Activated CD4-positive, alpha-beta T cell treated with anti-CD3 and anti-CD28 coated beads for 36 hours (primary cell): ENCODE measurements at regions of chr17 and their contacts with region 1.

Region 1: GRCh38 chr17:76557368-76558197 is 17.7 kb downstream of the PRCD start:
- DNase-seq: peak; percentile 97
- ATAC-seq: peak; percentile 87
- H3K4me3 Mint-ChIP-seq: peak overlapping the region; percentile 100
- H3K27ac Mint-ChIP-seq: peak overlapping the region; percentile 99
- H3K4me1 Mint-ChIP-seq: peaks cover 50% of the 10 kb centered on the region
- H3K27me3 Mint-ChIP-seq: no peaks in the 10 kb centered on the region

Region 2: GRCh38 chr17:76261421-76262215 is 296.0 kb before region 1 on chr17:
- CTCF ChIA-PET with region 1: no interaction called
- POLR2A ChIA-PET with region 1: no interaction called
- intact Hi-C with region 1: no loop called
- DNase-seq: peak; percentile 54
- ATAC-seq: no peak
- H3K4me3 Mint-ChIP-seq: peak overlapping the region; percentile 8
- H3K27ac Mint-ChIP-seq: peak overlapping the region; percentile 85
- H3K4me1 Mint-ChIP-seq: peaks cover 35% of the 10 kb centered on the region
- H3K27me3 Mint-ChIP-seq: no peaks in the 10 kb centered on the region

Region 3: DNA sequence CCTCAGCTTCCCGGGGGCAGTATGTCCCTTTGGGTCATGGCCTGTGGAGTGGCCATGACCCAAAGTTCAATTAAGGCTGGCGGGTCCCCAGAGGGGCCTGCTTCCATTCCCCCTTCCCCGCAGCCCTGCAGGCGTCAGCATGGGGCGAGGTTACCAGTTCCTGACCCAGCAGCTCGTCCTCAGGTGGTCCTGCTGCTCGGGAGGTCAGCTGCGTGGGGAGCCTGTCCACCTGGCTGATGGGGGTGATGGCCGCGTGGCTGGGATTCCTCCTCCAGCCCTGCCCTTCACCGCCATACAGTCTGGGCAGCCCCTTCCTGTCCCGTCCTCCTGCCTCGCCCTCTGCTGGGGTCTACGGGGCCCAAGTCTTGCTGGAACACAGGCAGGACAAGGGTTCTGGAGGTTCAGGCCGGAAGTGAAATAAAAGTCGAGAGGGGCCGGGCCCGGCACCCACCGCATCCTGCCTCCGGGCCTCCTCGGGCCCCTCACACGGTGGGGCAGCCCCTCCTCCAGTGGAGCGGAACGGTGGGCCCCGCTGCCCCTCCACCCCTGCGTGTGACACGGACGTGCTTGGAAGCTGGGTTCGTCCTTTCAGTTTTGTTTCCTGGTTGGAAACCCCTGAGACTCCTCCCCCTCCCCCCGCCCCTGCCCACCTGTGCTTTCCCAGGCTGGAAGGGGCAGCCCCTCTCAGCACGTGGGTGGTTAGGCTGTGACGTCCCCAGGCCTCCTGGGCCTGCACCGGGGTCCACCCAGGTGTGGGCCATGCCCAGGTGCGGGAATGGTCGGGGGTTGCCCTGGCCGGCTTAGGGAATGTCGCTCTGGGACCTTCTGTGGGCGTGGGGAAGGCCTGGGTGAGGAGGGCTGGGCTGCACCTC is 285.7 kb before region 1 on chr17:
- CTCF ChIA-PET with region 1: no interaction called
- POLR2A ChIA-PET with region 1: interaction called, 4 read pairs
- intact Hi-C with region 1: loop called in 1 of 2 experiments (anchors 1 kb)
- DNase-seq: peak; percentile 95
- ATAC-seq: peak; percentile 57
- H3K4me3 Mint-ChIP-seq: peak overlapping the region; percentile 96
- H3K27ac Mint-ChIP-seq: peak overlapping the region; percentile 98
- H3K4me1 Mint-ChIP-seq: peaks cover 70% of the 10 kb centered on the region
- H3K27me3 Mint-ChIP-seq: no peaks in the 10 kb centered on the region

Region 4: GRCh38 chr17:76452660-76453430 is 104.7 kb before region 1 on chr17 and contains the start of gene UBE2O:
- CTCF ChIA-PET with region 1: interaction called, 3 read pairs
- POLR2A ChIA-PET with region 1: no interaction called
- intact Hi-C with region 1: loop called (anchors 1 to 5 kb)
- DNase-seq: peak; percentile 96
- ATAC-seq: peak; percentile 96
- H3K4me3 Mint-ChIP-seq: peak within 1 kb of the TSS; percentile 84
- H3K27ac Mint-ChIP-seq: peak within 1 kb of the TSS; percentile 55
- H3K4me1 Mint-ChIP-seq: peaks cover 36% of the 10 kb centered on the region
- H3K27me3 Mint-ChIP-seq: no peaks in the 10 kb centered on the region
- total RNA-seq, gene UBE2O: 28.1 to 30.7 TPM

Region 5: DNA sequence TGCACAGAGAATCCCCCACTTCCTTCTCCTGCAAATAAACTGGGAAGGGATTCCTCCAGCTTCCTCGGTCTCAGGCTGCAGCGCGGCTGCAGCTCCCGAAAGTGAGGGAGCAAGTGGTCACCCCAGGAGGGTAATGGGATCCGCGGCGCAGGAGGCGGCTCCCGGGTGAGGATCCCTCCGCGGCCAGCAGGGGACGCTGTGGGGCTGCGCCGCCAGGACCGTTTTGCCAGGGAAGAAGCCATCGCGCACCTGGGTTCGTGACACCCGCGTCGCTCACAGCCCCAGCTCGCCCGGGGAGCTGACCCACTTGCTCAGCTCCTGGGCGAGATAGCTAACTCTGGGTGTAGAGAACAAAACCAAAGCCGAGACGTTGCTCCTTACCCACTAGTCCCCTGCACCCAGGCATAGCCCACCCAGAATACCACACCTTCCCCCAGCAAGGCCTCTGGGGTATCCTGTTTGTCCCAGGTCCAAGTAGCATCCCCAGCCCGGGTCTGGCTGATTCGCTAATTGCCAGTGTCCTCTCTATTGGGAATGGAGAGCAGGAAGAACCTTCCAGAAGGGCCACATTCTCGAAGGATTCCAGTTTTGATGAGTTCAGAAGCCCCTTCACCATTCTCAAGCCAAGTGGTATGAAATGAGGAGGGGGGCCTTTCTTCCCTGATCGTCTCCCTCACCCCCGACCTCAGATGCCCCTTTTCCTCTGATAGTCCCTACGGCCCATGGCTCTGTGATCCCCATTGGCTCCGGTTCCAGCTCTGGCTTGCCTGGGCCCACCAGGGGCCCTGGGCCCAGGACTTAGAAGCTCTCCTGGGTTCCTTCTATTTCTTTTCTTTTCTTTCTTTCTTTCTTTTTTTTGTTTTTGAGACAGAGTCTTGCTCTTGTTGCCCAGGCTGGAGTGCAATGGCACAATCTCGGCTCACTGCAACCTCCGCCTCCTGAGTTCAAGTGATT is 34.2 kb before region 1 on chr17:
- CTCF ChIA-PET with region 1: interaction called, 23 read pairs
- POLR2A ChIA-PET with region 1: interaction called, 5 read pairs
- intact Hi-C with region 1: loop called in 1 of 2 experiments (anchors 1 kb)
- DNase-seq: peak; percentile 89
- ATAC-seq: peak; percentile 89
- H3K4me3 Mint-ChIP-seq: no peak overlapping the region
- H3K27ac Mint-ChIP-seq: no peak overlapping the region
- H3K4me1 Mint-ChIP-seq: peaks cover 13% of the 10 kb centered on the region
- H3K27me3 Mint-ChIP-seq: no peaks in the 10 kb centered on the region

Region 6: GRCh38 chr17:76623271-76624146 is 65.9 kb after region 1 on chr17:
- CTCF ChIA-PET with region 1: interaction called, 10 read pairs
- POLR2A ChIA-PET with region 1: interaction called, 3 read pairs
- intact Hi-C with region 1: loop called (anchors 1 to 10 kb)
- DNase-seq: peak; percentile 87
- ATAC-seq: peak; percentile 96
- H3K4me3 Mint-ChIP-seq: no peak overlapping the region
- H3K27ac Mint-ChIP-seq: no peak overlapping the region
- H3K4me1 Mint-ChIP-seq: peaks cover 7% of the 10 kb centered on the region
- H3K27me3 Mint-ChIP-seq: peaks cover 7% of the 10 kb centered on the region

Region 7: DNA sequence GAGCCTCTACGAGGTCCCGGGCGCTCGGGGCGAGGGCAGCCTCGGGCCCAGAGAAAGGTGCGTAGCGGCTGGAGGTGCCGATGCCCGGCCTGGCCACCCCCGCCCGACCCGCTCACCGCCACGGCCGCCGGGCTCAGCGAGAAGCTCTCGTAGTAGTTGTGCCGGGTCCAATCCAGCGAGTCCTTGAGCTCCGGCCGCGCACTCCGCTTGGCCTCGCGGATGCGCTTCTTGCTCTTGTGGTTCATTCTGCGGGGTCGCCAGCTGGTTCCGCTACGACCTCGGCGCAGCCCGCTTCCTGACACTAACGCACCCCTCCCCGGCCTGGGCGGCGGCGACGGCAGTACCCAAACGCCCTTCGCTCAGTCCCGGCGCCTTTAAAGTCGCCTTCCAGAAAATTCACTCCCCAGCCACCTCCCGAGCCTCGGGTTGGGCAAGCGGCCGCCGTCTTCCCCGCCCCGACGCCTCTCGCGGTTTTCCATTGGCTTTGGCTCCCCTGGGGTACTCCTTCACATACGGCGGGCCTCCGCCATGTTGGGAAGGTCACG is 168.7 kb after region 1 on chr17 and contains the start of gene JMJD6:
- CTCF ChIA-PET with region 1: no interaction called
- POLR2A ChIA-PET with region 1: no interaction called
- intact Hi-C with region 1: loop called in 1 of 2 experiments (anchors 1 kb)
- DNase-seq: peak; percentile 97
- ATAC-seq: peak; percentile 87
- H3K4me3 Mint-ChIP-seq: peak within 1 kb of the TSS; percentile 97
- H3K27ac Mint-ChIP-seq: peak within 1 kb of the TSS; percentile 98
- H3K4me1 Mint-ChIP-seq: peaks cover 54% of the 10 kb centered on the region
- H3K27me3 Mint-ChIP-seq: no peaks in the 10 kb centered on the region
- total RNA-seq, gene JMJD6: 51.3 to 65.5 TPM